ENCODE measurements at regions of chr1 and their contacts with region 1.

Region 1: DNA sequence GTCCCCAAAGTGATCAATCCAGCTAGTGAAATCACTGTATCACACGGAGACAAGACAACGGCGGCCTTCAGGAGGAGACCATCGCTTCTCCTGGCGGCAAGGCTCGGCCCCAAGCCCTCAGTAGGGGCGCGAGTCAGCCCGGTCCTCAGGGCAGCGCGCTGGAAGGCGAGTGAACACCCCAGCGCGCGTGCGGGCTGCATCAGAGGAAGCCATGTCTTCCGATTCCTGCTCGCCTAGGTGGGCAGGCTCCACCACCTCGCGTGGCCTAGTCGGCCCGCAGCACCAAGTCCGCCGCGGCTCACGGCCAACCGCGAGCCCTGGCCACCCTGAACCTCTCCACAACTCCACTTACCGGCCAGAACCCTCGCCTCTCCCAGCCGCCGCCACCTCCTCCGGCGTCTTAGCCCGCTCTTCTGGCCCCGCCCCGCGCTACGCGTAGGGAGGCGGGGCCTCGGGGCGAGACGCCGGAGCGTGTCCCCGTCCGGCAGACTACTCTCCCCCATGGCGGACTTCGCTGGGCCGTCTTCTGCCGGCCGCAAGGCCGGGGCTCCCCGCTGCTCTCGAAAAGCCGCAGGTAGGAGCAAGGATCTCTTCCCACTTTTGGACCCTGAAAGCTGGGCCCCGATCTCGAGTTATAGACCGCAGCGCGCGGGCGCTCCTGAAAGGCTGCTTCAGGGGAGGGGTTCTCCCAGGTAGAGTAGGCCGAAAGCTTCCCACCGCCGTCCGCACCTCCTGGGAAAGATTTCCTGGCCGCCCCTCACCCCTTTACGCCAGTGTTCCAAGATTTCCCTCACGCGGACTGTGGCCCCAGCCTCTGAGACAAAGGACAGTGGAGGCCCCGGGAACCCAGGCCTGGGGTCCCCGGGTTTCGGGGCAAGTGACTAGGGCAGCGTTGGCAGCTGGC is at the starts of genes GLMN and RPAP2:
- DNase-seq: peak; percentile 17 to 86
- H3K4me3 ChIP-seq: peak within 1 kb of the TSS; percentile 92 to 96
- H3K27ac ChIP-seq: peak within 1 kb of the TSS; percentile 95 to 96
- H3K4me1 ChIP-seq: peaks cover 0 to 14% of the 10 kb centered on the region in 2 donors
- H3K27me3 ChIP-seq: no peaks in the 10 kb centered on the region
- CTCF ChIP-seq: peak in 1 of 3 experiments; percentile 2
- total RNA-seq, gene GLMN: 9.8 TPM
- total RNA-seq, gene RPAP2: 1.5 TPM

Region 2: DNA sequence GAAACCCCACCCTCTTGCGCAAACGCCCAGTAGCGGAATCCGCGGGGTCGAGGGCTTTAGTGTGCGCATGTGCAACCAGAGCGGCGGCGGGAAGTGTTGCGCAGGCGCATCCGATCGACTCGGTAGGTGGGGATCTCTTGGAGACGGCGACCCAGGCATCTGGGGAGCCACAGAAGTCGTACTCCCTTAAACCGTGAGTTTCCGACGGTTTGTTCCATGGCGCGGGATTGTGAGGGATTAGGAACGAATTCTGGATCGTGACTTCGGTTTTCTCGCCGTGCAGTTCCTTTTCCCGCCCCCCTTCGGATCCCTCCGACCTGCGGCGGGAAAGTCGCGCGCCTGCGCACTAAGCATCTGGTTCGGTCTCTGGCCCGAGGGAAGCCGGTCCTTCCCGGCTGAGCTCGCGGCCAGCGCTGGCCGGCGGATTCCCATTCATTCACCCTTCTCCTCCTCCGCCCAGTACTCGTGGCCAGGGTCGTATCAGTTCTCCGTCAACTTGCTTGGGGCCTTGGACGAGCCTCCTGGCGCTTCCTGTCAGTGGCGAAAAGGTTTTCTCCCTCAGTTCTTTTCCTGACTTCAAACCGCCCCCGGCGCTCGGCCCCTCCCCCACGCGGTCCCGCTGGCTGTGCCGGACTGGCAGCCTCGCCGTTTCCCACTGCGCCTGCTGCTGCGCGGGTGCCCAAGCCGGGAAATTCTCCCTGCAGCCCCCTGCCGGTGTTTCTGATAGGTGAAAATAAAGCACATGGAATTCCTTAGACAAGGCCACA is 797.9 kb before region 1 on chr1 and contains the start of gene CDC7:
- intact Hi-C with region 1: loop called (anchors 2 kb)
- DNase-seq: peak; percentile 29 to 94
- H3K4me3 ChIP-seq: peak within 1 kb of the TSS; percentile 61 to 82
- H3K27ac ChIP-seq: peak within 1 kb of the TSS; percentile 68 to 78
- H3K4me1 ChIP-seq: no peaks in the 10 kb centered on the region
- H3K27me3 ChIP-seq: no peaks in the 10 kb centered on the region
- CTCF ChIP-seq: peak in 1 of 3 experiments; percentile 26
- total RNA-seq, gene CDC7: 2.7 TPM

Region 3: GRCh38 chr1:91697416-91697815 is 601.4 kb before region 1 on chr1:
- intact Hi-C with region 1: no loop called
- DNase-seq: no peak
- H3K4me3 ChIP-seq: no peak overlapping the region
- H3K27ac ChIP-seq: peak overlapping the region in 1 of 2 donors; percentile 30
- H3K4me1 ChIP-seq: peaks cover 0 to 27% of the 10 kb centered on the region in 2 donors
- H3K27me3 ChIP-seq: no peaks in the 10 kb centered on the region
- CTCF ChIP-seq: no peak

Region 4: DNA sequence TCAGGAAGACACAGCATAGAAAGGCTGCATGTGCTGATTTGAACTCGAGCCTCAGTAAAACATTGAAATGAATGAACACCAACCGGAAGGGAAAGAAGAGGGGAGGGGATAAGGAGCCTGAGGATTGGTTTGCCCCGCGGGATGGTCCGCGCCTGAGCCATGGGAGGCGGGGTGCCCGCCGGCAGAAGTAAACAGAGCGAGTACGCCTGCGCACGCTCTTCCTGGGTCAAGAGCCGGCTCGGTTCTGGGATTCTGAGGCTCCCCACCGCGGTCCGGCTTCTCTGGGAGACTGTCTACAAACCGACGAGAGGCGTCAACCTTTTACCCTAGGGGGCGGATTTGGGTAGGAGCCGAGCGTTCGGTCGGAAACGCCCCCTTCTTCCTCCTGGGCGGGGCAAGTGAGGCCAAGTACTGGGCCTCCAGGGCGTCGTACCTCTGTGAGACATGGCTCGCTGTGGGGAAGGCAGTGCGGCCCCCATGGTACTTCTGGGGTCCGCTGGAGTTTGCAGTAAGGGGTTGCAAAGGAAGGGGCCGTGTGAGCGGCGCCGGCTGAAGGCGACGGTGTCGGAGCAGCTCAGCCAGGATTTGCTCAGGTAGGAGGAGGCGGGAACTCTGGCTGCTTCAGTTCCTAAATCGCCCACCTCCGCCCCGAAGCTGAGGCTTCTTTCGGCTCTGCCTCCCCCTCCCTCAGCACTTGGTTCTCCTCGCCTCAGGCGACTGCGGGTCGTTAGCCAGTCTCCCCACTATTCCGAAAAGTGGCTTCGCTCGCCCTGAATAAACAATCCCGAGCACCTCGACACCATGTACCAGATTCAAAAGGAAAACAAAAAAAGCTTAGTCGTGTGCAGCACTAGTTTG is 218.5 kb before region 1 on chr1 and contains the start of gene BTBD8:
- intact Hi-C with region 1: loop called (anchors 5 kb)
- DNase-seq: peak; percentile 47 to 91
- H3K4me3 ChIP-seq: peak within 1 kb of the TSS; percentile 62 to 89
- H3K27ac ChIP-seq: peak within 1 kb of the TSS; percentile 63 to 69
- H3K4me1 ChIP-seq: peaks cover 3 to 8% of the 10 kb centered on the region in 2 donors
- H3K27me3 ChIP-seq: no peaks in the 10 kb centered on the region
- CTCF ChIP-seq: no peak
- total RNA-seq, gene BTBD8: 3.6 TPM

Region 5: DNA sequence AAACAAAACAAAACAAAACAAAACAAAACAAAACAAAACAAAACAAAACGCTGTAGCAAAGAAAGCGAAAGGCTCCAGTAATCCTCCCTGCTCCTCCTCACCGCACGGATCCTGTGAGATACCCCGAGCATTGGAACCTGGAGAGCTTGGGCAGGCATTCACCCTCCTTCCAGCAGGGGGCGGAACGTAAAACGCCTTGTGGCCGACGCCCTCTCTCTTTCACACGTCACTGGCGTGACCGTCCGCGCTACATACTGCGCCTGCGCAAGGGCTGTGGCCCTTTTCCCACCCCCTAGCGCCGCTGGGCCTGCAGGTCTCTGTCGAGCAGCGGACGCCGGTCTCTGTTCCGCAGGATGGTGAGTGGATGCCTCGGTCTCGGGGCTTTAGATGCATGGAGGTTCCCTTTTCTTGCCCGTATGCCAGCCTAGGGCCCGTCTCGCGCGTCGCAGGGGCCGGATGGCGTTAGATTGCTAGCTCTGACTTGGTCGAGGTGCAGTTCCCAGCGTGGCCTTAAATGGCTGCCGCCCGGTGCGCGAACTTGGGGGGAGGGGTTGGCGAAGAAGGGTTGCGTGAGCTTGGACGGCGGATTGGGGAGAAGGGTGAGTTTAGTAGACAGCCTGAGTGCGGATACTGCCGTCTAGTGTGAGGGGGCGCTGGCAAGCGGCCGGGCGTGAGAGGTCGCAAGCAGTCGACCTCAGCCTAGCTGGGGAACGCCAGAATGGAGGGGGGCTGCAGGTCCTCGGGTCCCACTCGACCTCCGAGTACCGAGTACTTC is 533.1 kb after region 1 on chr1 and contains the start of gene RPL5:
- intact Hi-C with region 1: loop called (anchors 10 kb)
- DNase-seq: peak; percentile 81 to 98
- H3K4me3 ChIP-seq: peak within 1 kb of the TSS; percentile 80
- H3K27ac ChIP-seq: peak within 1 kb of the TSS; percentile 85 to 90
- H3K4me1 ChIP-seq: peaks cover 12 to 16% of the 10 kb centered on the region in 2 donors
- H3K27me3 ChIP-seq: no peaks in the 10 kb centered on the region
- CTCF ChIP-seq: peak; percentile 74 to 95 (median 92)
- total RNA-seq, gene RPL5: 617 TPM

Measured in ascending aorta (tissue), 2 donors.